ENCODE measurements at regions of chr3 and their contacts with region 1.

Region 1: GRCh38 chr3:183635431-183636220 is at the start of gene KLHL24:
- DNase-seq: peak; percentile 94
- ATAC-seq: peak; percentile 82
- H3K4me3 Mint-ChIP-seq: peak within 1 kb of the TSS; percentile 90
- H3K27ac Mint-ChIP-seq: peak within 1 kb of the TSS; percentile 92
- H3K4me1 Mint-ChIP-seq: peaks cover 26% of the 10 kb centered on the region
- H3K27me3 Mint-ChIP-seq: no peaks in the 10 kb centered on the region
- total RNA-seq, gene KLHL24: 8.0 to 9.2 TPM

Region 2: GRCh38 chr3:183591881-183592521 is 43.6 kb before region 1 on chr3:
- CTCF ChIA-PET with region 1: interaction called, 3 read pairs
- POLR2A ChIA-PET with region 1: interaction called, 11 read pairs
- DNase-seq: no peak
- ATAC-seq: no peak
- H3K4me3 Mint-ChIP-seq: peak overlapping the region; percentile 44
- H3K27ac Mint-ChIP-seq: peak overlapping the region; percentile 58
- H3K4me1 Mint-ChIP-seq: peaks cover 20% of the 10 kb centered on the region
- H3K27me3 Mint-ChIP-seq: no peaks in the 10 kb centered on the region

Region 3: GRCh38 chr3:183697610-183698317 is 62.1 kb after region 1 on chr3 and contains the start of gene YEATS2:
- CTCF ChIA-PET with region 1: interaction called, 6 read pairs
- POLR2A ChIA-PET with region 1: interaction called, 47 read pairs
- DNase-seq: peak; percentile 71
- ATAC-seq: peak; percentile 84
- H3K4me3 Mint-ChIP-seq: peak within 1 kb of the TSS; percentile 84
- H3K27ac Mint-ChIP-seq: peak within 1 kb of the TSS; percentile 90
- H3K4me1 Mint-ChIP-seq: peaks cover 29% of the 10 kb centered on the region
- H3K27me3 Mint-ChIP-seq: no peaks in the 10 kb centered on the region
- total RNA-seq, gene YEATS2: 49.3 to 52.6 TPM

Measured in activated CD8-positive, alpha-beta T cell treated with anti-CD3 and anti-CD28 coated beads, Interleukin-2, amount 10 ng/mL, durations not matched to agents 7 days and 5 days (primary cell).